Caco-2 (cell line): ENCODE measurements at regions of chr11 and their contacts with region 1.

Region 1: GRCh38 chr11:78365381-78365792 is 52.2 kb downstream of the GAB2 start:
- DNase-seq: peak; percentile 85 to 90
- H3K4me3 ChIP-seq: no peak overlapping the region
- H3K4me3 Mint-ChIP-seq: peak overlapping the region; percentile 48
- H3K27ac Mint-ChIP-seq: peak overlapping the region; percentile 75
- H3K4me1 ChIP-seq: peaks cover 73% of the 10 kb centered on the region
- H3K4me1 Mint-ChIP-seq: peaks cover 58% of the 10 kb centered on the region
- H3K27me3 ChIP-seq: no peaks in the 10 kb centered on the region
- H3K27me3 Mint-ChIP-seq: no peaks in the 10 kb centered on the region
- CTCF ChIP-seq: no peak

Region 2: GRCh38 chr11:78149646-78150045 is 215.7 kb before region 1 on chr11:
- CTCF ChIA-PET with region 1: no interaction called
- POLR2A ChIA-PET with region 1: interaction called, 23 read pairs
- intact Hi-C with region 1: no loop called
- DNase-seq: peak in 1 of 2 experiments; percentile 31
- H3K4me3 ChIP-seq: no peak overlapping the region
- H3K4me3 Mint-ChIP-seq: no peak overlapping the region
- H3K27ac Mint-ChIP-seq: no peak overlapping the region
- H3K4me1 ChIP-seq: peaks cover 19% of the 10 kb centered on the region
- H3K4me1 Mint-ChIP-seq: peaks cover 16% of the 10 kb centered on the region
- H3K27me3 ChIP-seq: no peaks in the 10 kb centered on the region
- H3K27me3 Mint-ChIP-seq: no peaks in the 10 kb centered on the region
- CTCF ChIP-seq: peak in 1 of 2 experiments; percentile 15

Region 3: GRCh38 chr11:78228467-78228866 is 136.9 kb before region 1 on chr11:
- CTCF ChIA-PET with region 1: interaction called, 3 read pairs
- POLR2A ChIA-PET with region 1: no interaction called
- intact Hi-C with region 1: loop called (anchors 2 kb)
- DNase-seq: peak; percentile 72 to 81
- H3K4me3 ChIP-seq: no peak overlapping the region
- H3K4me3 Mint-ChIP-seq: no peak overlapping the region
- H3K27ac Mint-ChIP-seq: peak overlapping the region; percentile 24
- H3K4me1 ChIP-seq: no peaks in the 10 kb centered on the region
- H3K4me1 Mint-ChIP-seq: no peaks in the 10 kb centered on the region
- H3K27me3 ChIP-seq: no peaks in the 10 kb centered on the region
- H3K27me3 Mint-ChIP-seq: no peaks in the 10 kb centered on the region
- CTCF ChIP-seq: peak; percentile 79 to 88

Region 4: GRCh38 chr11:78281511-78281910 is 83.9 kb before region 1 on chr11:
- CTCF ChIA-PET with region 1: no interaction called
- POLR2A ChIA-PET with region 1: no interaction called
- intact Hi-C with region 1: loop called (anchors 2 kb)
- DNase-seq: peak in 1 of 2 experiments; percentile 72
- H3K4me3 ChIP-seq: no peak overlapping the region
- H3K4me3 Mint-ChIP-seq: no peak overlapping the region
- H3K27ac Mint-ChIP-seq: no peak overlapping the region
- H3K4me1 ChIP-seq: peaks cover 22% of the 10 kb centered on the region
- H3K4me1 Mint-ChIP-seq: peaks cover 17% of the 10 kb centered on the region
- H3K27me3 ChIP-seq: no peaks in the 10 kb centered on the region
- H3K27me3 Mint-ChIP-seq: no peaks in the 10 kb centered on the region
- CTCF ChIP-seq: no peak

Region 5: DNA sequence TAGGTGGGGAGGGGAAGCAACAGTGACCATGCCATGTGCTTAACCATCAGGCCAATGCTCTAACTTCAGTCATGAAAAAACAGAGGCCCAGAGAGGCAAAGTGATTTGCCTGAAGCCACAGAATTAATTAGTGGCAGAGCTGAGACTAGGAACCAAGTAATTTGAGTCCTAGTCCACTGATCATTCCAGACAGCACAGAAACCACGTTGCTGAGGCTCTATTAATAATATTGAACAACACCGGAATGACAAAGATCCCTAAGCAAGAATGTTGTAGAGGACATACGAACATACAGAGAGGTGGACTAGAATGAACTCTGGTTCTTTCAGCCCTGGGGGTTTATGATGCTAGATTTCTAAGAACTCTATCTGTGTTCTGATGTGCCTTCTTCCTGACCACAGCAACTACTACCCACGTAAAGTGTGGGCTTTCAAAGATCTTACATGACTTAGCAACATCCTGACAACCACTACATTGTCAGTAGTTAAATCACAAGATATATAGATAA is 40.1 kb before region 1 on chr11:
- CTCF ChIA-PET with region 1: no interaction called
- POLR2A ChIA-PET with region 1: no interaction called
- intact Hi-C with region 1: no loop called
- DNase-seq: no peak
- H3K4me3 ChIP-seq: no peak overlapping the region
- H3K4me3 Mint-ChIP-seq: no peak overlapping the region
- H3K27ac Mint-ChIP-seq: no peak overlapping the region
- H3K4me1 ChIP-seq: no peaks in the 10 kb centered on the region
- H3K4me1 Mint-ChIP-seq: no peaks in the 10 kb centered on the region
- H3K27me3 ChIP-seq: no peaks in the 10 kb centered on the region
- H3K27me3 Mint-ChIP-seq: no peaks in the 10 kb centered on the region
- CTCF ChIP-seq: no peak

Region 6: DNA sequence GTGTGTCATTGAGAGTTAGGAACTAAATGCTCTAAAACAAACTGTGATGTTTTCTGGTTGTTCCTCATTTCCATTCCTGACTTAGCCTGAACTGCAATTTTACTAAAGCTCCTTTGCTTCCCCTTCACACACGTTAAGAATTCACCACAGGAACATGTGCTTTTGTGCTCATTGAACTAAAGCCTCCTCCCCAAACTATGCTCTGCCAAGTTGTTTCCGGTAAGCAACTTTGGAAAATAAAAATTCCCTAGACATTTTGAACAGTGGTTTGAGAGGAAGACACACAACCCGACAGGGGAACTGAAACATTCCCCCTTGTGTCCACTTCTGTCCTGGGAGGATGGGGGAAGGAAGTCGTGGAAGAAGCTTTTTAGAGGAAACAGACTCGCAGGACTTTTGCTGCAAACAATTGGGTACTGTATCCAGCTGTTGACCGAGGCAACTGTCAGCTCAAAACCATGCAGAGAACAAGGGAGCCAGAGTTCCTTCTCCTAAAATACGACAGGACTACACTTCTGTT is 14.7 kb before region 1 on chr11:
- CTCF ChIA-PET with region 1: no interaction called
- POLR2A ChIA-PET with region 1: interaction called, 13 read pairs
- intact Hi-C with region 1: no loop called
- DNase-seq: no peak
- H3K4me3 ChIP-seq: no peak overlapping the region
- H3K4me3 Mint-ChIP-seq: no peak overlapping the region
- H3K27ac Mint-ChIP-seq: no peak overlapping the region
- H3K4me1 ChIP-seq: peaks cover 29% of the 10 kb centered on the region
- H3K4me1 Mint-ChIP-seq: peaks cover 47% of the 10 kb centered on the region
- H3K27me3 ChIP-seq: no peaks in the 10 kb centered on the region
- H3K27me3 Mint-ChIP-seq: no peaks in the 10 kb centered on the region
- CTCF ChIP-seq: no peak

Region 7: GRCh38 chr11:78379039-78379670 is 13.8 kb after region 1 on chr11:
- CTCF ChIA-PET with region 1: interaction called, 5 read pairs
- POLR2A ChIA-PET with region 1: interaction called, 6 read pairs
- intact Hi-C with region 1: loop called (anchors 1 kb)
- DNase-seq: no peak
- H3K4me3 ChIP-seq: no peak overlapping the region
- H3K4me3 Mint-ChIP-seq: peak overlapping the region; percentile 64
- H3K27ac Mint-ChIP-seq: peak overlapping the region; percentile 93
- H3K4me1 ChIP-seq: peaks cover 75% of the 10 kb centered on the region
- H3K4me1 Mint-ChIP-seq: peaks cover 60% of the 10 kb centered on the region
- H3K27me3 ChIP-seq: no peaks in the 10 kb centered on the region
- H3K27me3 Mint-ChIP-seq: no peaks in the 10 kb centered on the region
- CTCF ChIP-seq: no peak

Region 8: GRCh38 chr11:78416305-78417178 is 51.2 kb after region 1 on chr11:
- CTCF ChIA-PET with region 1: no interaction called
- POLR2A ChIA-PET with region 1: interaction called, 5 read pairs
- intact Hi-C with region 1: loop called (anchors 1 kb)
- DNase-seq: peak; percentile 93 to 96
- H3K4me3 ChIP-seq: peak overlapping the region; percentile 70
- H3K4me3 Mint-ChIP-seq: peak overlapping the region; percentile 76
- H3K27ac Mint-ChIP-seq: peak overlapping the region; percentile 79
- H3K4me1 ChIP-seq: peaks cover 23% of the 10 kb centered on the region
- H3K4me1 Mint-ChIP-seq: peaks cover 38% of the 10 kb centered on the region
- H3K27me3 ChIP-seq: no peaks in the 10 kb centered on the region
- H3K27me3 Mint-ChIP-seq: no peaks in the 10 kb centered on the region
- CTCF ChIP-seq: peak; percentile 81 to 88